Breast epithelium (tissue), 4 donors: ENCODE measurements at regions of chr1 and their contacts with region 1.

Region 1: GRCh38 chr1:91500756-91501522 is at the start of gene CDC7:
- DNase-seq: peak; percentile 76 to 80
- H3K4me3 ChIP-seq: peak within 1 kb of the TSS; percentile 51 to 75 (median 73)
- H3K27ac ChIP-seq: peak within 1 kb of the TSS; percentile 84 to 91
- H3K4me1 ChIP-seq: no peaks in the 10 kb centered on the region
- H3K27me3 ChIP-seq: no peaks in the 10 kb centered on the region
- CTCF ChIP-seq: peak in 2 of 3 donors; percentile 14 to 27
- POLR2A ChIP-seq: no peak
- total RNA-seq, gene CDC7: 0.48 to 4.9 (median 4.1) TPM

Region 2: DNA sequence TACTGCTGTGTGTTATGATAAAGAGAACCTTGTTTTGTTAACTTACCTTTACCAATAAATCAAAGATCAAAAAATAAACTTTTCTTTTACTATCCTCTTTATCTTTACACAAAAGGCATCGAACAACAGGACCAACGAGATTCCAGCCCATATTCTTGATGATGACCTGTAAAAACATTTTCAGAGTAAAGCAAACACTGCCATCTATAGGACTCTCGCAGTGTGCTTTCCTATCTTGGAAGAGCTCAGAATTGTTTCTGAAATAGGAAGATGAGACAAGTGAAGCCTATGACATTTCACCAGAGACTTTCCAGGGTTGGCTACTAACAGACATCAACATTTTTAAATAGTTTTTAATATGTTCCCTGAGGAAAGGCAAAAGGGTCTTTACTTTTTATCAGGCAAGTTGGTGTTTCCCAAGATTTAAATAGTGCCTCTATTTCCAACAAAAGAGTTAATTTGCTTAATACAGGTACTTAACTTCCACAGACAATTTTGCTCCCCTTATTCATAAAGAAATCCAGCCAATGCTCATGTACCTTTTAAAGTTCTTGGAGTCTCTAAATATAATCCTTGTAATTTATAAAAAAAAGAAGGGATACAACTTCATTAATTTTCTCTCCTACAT is 790.5 kb after region 1 on chr1:
- intact Hi-C with region 1: loop called (anchors 5 kb)
- DNase-seq: no peak
- H3K4me3 ChIP-seq: no peak overlapping the region
- H3K27ac ChIP-seq: no peak overlapping the region
- H3K4me1 ChIP-seq: no peaks in the 10 kb centered on the region
- H3K27me3 ChIP-seq: no peaks in the 10 kb centered on the region
- CTCF ChIP-seq: peak in 2 of 3 donors; percentile 42 to 51
- POLR2A ChIP-seq: no peak